Heart left ventricle (tissue), 16 donors: ENCODE measurements at regions of chr14 and their contacts with region 1.

Region 1: GRCh38 chr14:61296719-61297502 is 15.8 kb upstream of the TMEM30B start:
- DNase-seq: no peak
- ATAC-seq: peak in 1 of 4 donors; percentile 57
- H3K4me3 ChIP-seq: no peak overlapping the region
- H3K27ac ChIP-seq: no peak overlapping the region
- H3K4me1 ChIP-seq: peaks cover 0 to 19% (median 0%) of the 10 kb centered on the region in 12 donors
- H3K27me3 ChIP-seq: no peaks in the 10 kb centered on the region
- CTCF ChIP-seq: peak; percentile 51 to 77 (median 68)
- POLR2A ChIP-seq: no peak

Region 2: GRCh38 chr14:61456720-61457119 is 159.8 kb after region 1 on chr14:
- intact Hi-C with region 1: loop called (anchors 5 kb)
- DNase-seq: peak in 4 of 5 donors; percentile 81 to 90 (median 85)
- ATAC-seq: peak in 3 of 4 donors; percentile 76 to 83 (median 78)
- H3K4me3 ChIP-seq: no peak overlapping the region
- H3K27ac ChIP-seq: no peak overlapping the region
- H3K4me1 ChIP-seq: peaks cover 0 to 38% (median 13%) of the 10 kb centered on the region in 12 donors
- H3K27me3 ChIP-seq: no peaks in the 10 kb centered on the region
- CTCF ChIP-seq: peak; percentile 78 to 94 (median 88)
- POLR2A ChIP-seq: no peak

Region 3: GRCh38 chr14:61730756-61731373 is 434.0 kb after region 1 on chr14:
- intact Hi-C with region 1: loop called in 4 of 10 experiments (anchors 10 kb)
- DNase-seq: no peak
- ATAC-seq: no peak
- H3K4me3 ChIP-seq: no peak overlapping the region
- H3K27ac ChIP-seq: peak overlapping the region in 3 of 12 donors; percentile 18 to 44 (median 25)
- H3K4me1 ChIP-seq: peaks cover 0 to 26% (median 8%) of the 10 kb centered on the region in 12 donors
- H3K27me3 ChIP-seq: no peaks in the 10 kb centered on the region
- CTCF ChIP-seq: peak in 11 of 12 donors; percentile 26 to 71 (median 55)
- POLR2A ChIP-seq: no peak